Heart left ventricle (tissue), 16 donors: ENCODE measurements at regions of chr5 and their contacts with region 1.

Region 1: DNA sequence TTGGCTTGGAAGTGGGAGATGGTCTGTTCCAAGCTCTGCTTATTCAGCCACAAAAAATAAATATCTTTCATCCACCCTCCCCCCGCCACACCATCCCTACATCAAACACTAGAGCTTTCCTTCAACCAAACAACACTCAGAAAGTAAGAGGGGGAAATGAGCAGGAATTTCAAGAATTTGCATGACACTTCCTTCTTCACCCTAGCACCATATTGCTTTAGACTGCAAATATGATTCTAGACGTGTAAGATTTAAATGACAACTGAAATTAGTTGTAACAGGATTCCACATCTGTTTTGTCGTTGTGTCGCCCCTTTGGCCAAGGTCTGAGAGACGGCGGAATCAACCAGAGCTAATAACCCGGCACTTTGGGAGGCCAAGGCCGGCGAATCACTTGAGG is 88.5 kb downstream of the NDFIP1 start:
- DNase-seq: no peak
- ATAC-seq: no peak
- H3K4me3 ChIP-seq: no peak overlapping the region
- H3K27ac ChIP-seq: no peak overlapping the region
- H3K4me1 ChIP-seq: peaks cover 0 to 14% (median 6%) of the 10 kb centered on the region in 12 donors
- H3K27me3 ChIP-seq: no peaks in the 10 kb centered on the region
- CTCF ChIP-seq: no peak
- POLR2A ChIP-seq: no peak

Region 2: DNA sequence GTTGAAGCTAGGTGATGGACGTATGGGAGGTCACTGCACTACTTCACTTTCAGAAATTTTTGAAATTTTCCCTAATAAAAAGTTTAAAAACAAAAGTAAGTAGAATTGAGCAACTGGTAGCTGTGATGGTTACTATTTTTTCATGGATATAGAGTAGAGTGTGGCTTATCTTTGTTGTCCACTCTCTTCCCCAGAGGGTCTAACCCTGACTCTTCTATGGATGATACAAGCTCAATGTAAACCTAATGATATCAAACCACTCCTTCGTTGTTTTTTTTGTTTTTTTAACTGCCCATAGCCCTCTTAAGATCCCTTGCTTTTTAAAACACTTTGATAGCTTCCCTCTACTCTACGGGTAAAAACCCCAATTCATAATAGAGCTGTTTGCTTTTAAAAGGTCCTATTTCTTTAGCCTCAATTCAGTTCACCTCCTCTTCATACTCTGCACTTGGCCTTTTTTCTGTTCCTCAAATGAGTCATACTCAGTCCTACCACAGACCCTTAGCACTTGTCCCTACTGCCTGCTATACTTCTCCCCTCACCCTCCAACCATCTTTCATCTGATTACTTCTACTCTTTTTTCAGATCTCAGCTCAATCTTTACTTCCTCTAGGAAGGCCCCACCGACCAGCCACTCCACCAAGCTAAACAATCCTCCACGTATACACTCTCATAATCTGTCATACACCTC is 563.1 kb before region 1 on chr5:
- intact Hi-C with region 1: loop called in 1 of 10 experiments (anchors 5 kb)
- DNase-seq: no peak
- ATAC-seq: no peak
- H3K4me3 ChIP-seq: no peak overlapping the region
- H3K27ac ChIP-seq: no peak overlapping the region
- H3K4me1 ChIP-seq: peaks cover 3 to 49% (median 26%) of the 10 kb centered on the region in 12 donors
- H3K27me3 ChIP-seq: no peaks in the 10 kb centered on the region
- CTCF ChIP-seq: no peak
- POLR2A ChIP-seq: no peak

Region 3: GRCh38 chr5:142316051-142316450 is 119.0 kb after region 1 on chr5:
- intact Hi-C with region 1: no loop called
- DNase-seq: no peak
- ATAC-seq: peak in 3 of 4 donors; percentile 16 to 38 (median 32)
- H3K4me3 ChIP-seq: peak overlapping the region in 6 of 12 donors; percentile 2 to 29 (median 20)
- H3K27ac ChIP-seq: peak overlapping the region in 11 of 12 donors; percentile 27 to 97 (median 83)
- H3K4me1 ChIP-seq: peaks cover 20 to 98% (median 84%) of the 10 kb centered on the region in 12 donors
- H3K27me3 ChIP-seq: peaks cover 0 to 4% (median 0%) of the 10 kb centered on the region in 9 donors
- CTCF ChIP-seq: no peak
- POLR2A ChIP-seq: no peak